Natural killer cell (primary cell): ENCODE measurements at regions of chr1 and their contacts with region 1.

Region 1: GRCh38 chr1:1748686-1749321 is 24.6 kb upstream of the CDK11A start:
- DNase-seq: peak in 1 of 2 donors; percentile 15
- ATAC-seq: no peak
- H3K4me3 ChIP-seq: no peak overlapping the region
- H3K4me3 Mint-ChIP-seq: peak overlapping the region; percentile 62
- H3K27ac ChIP-seq: no peak overlapping the region
- H3K27ac Mint-ChIP-seq: peak overlapping the region; percentile 67 to 80
- H3K4me1 ChIP-seq: peaks cover 3% of the 10 kb centered on the region
- H3K4me1 Mint-ChIP-seq: peaks cover 4% of the 10 kb centered on the region in 2 donors
- H3K27me3 ChIP-seq: no peaks in the 10 kb centered on the region
- H3K27me3 Mint-ChIP-seq: no peaks in the 10 kb centered on the region
- CTCF ChIP-seq: no peak

Region 2: GRCh38 chr1:1703796-1704195 is 45.0 kb before region 1 on chr1:
- intact Hi-C with region 1: loop called (anchors 10 kb)
- DNase-seq: no peak
- ATAC-seq: no peak
- H3K4me3 ChIP-seq: no peak overlapping the region
- H3K4me3 Mint-ChIP-seq: no peak overlapping the region
- H3K27ac ChIP-seq: no peak overlapping the region
- H3K27ac Mint-ChIP-seq: no peak overlapping the region
- H3K4me1 ChIP-seq: no peaks in the 10 kb centered on the region
- H3K4me1 Mint-ChIP-seq: no peaks in the 10 kb centered on the region
- H3K27me3 ChIP-seq: no peaks in the 10 kb centered on the region
- H3K27me3 Mint-ChIP-seq: no peaks in the 10 kb centered on the region
- CTCF ChIP-seq: no peak

Region 3: GRCh38 chr1:1796466-1796865 is 47.7 kb after region 1 on chr1:
- intact Hi-C with region 1: no loop called
- DNase-seq: peak in 1 of 2 donors; percentile 47
- ATAC-seq: peak in 2 of 3 donors; percentile 64 to 65
- H3K4me3 ChIP-seq: no peak overlapping the region
- H3K4me3 Mint-ChIP-seq: no peak overlapping the region
- H3K27ac ChIP-seq: no peak overlapping the region
- H3K27ac Mint-ChIP-seq: peak overlapping the region; percentile 70 to 71
- H3K4me1 ChIP-seq: peaks cover 21% of the 10 kb centered on the region
- H3K4me1 Mint-ChIP-seq: peaks cover 35 to 45% of the 10 kb centered on the region in 2 donors
- H3K27me3 ChIP-seq: no peaks in the 10 kb centered on the region
- H3K27me3 Mint-ChIP-seq: no peaks in the 10 kb centered on the region
- CTCF ChIP-seq: no peak